Activated CD4-positive, alpha-beta T cell treated with anti-CD3 and anti-CD28 coated beads for 36 hours (primary cell): ENCODE measurements at regions of chr6 and their contacts with region 1.

Region 1: DNA sequence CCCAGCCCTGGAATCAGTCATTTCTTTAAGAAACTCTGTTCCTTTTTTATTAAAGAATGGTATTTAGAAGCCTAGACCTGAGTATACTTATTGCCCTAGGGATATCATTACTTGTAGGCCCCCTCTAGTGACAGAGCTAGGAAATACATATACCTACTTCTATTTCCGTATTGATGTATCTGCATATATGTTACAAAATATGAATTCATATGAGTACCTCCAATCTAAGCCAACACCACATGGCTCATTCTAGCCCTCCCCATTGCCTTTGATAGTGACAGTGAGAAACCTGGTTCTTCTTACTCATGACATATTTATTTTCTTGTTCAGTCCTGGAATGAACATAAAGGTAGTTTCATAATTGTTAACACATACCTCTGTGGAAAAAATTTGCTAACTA is 137.2 kb downstream of the FARS2 start:
- DNase-seq: peak; percentile 52
- ATAC-seq: peak; percentile 100
- H3K4me3 Mint-ChIP-seq: no peak overlapping the region
- H3K27ac Mint-ChIP-seq: no peak overlapping the region
- H3K4me1 Mint-ChIP-seq: peaks cover 22% of the 10 kb centered on the region
- H3K27me3 Mint-ChIP-seq: no peaks in the 10 kb centered on the region

Region 2: GRCh38 chr6:4637691-4638433 is 760.7 kb before region 1 on chr6:
- CTCF ChIA-PET with region 1: no interaction called
- POLR2A ChIA-PET with region 1: no interaction called
- intact Hi-C with region 1: loop called in 1 of 2 experiments (anchors 2 kb)
- DNase-seq: peak; percentile 69
- ATAC-seq: peak; percentile 99
- H3K4me3 Mint-ChIP-seq: no peak overlapping the region
- H3K27ac Mint-ChIP-seq: peak overlapping the region; percentile 78
- H3K4me1 Mint-ChIP-seq: peaks cover 27% of the 10 kb centered on the region
- H3K27me3 Mint-ChIP-seq: peaks cover 33% of the 10 kb centered on the region

Region 3: GRCh38 chr6:5143634-5144311 is 254.8 kb before region 1 on chr6:
- CTCF ChIA-PET with region 1: interaction called, 10 read pairs
- POLR2A ChIA-PET with region 1: no interaction called
- intact Hi-C with region 1: loop called (anchors 1 kb)
- DNase-seq: peak; percentile 91
- ATAC-seq: peak; percentile 71
- H3K4me3 Mint-ChIP-seq: no peak overlapping the region
- H3K27ac Mint-ChIP-seq: no peak overlapping the region
- H3K4me1 Mint-ChIP-seq: no peaks in the 10 kb centered on the region
- H3K27me3 Mint-ChIP-seq: no peaks in the 10 kb centered on the region

Region 4: GRCh38 chr6:5214570-5215052 is 183.9 kb before region 1 on chr6:
- CTCF ChIA-PET with region 1: interaction called, 5 read pairs
- POLR2A ChIA-PET with region 1: no interaction called
- intact Hi-C with region 1: loop called (anchors 2 to 10 kb)
- DNase-seq: peak; percentile 66
- ATAC-seq: peak; percentile 65
- H3K4me3 Mint-ChIP-seq: no peak overlapping the region
- H3K27ac Mint-ChIP-seq: no peak overlapping the region
- H3K4me1 Mint-ChIP-seq: peaks cover 10% of the 10 kb centered on the region
- H3K27me3 Mint-ChIP-seq: no peaks in the 10 kb centered on the region

Region 5: GRCh38 chr6:5279891-5280338 is 118.6 kb before region 1 on chr6:
- CTCF ChIA-PET with region 1: no interaction called
- POLR2A ChIA-PET with region 1: no interaction called
- intact Hi-C with region 1: loop called (anchors 1 kb)
- DNase-seq: peak; percentile 71
- ATAC-seq: peak; percentile 92
- H3K4me3 Mint-ChIP-seq: peak overlapping the region; percentile 10
- H3K27ac Mint-ChIP-seq: peak overlapping the region; percentile 91
- H3K4me1 Mint-ChIP-seq: peaks cover 43% of the 10 kb centered on the region
- H3K27me3 Mint-ChIP-seq: no peaks in the 10 kb centered on the region

Region 6: DNA sequence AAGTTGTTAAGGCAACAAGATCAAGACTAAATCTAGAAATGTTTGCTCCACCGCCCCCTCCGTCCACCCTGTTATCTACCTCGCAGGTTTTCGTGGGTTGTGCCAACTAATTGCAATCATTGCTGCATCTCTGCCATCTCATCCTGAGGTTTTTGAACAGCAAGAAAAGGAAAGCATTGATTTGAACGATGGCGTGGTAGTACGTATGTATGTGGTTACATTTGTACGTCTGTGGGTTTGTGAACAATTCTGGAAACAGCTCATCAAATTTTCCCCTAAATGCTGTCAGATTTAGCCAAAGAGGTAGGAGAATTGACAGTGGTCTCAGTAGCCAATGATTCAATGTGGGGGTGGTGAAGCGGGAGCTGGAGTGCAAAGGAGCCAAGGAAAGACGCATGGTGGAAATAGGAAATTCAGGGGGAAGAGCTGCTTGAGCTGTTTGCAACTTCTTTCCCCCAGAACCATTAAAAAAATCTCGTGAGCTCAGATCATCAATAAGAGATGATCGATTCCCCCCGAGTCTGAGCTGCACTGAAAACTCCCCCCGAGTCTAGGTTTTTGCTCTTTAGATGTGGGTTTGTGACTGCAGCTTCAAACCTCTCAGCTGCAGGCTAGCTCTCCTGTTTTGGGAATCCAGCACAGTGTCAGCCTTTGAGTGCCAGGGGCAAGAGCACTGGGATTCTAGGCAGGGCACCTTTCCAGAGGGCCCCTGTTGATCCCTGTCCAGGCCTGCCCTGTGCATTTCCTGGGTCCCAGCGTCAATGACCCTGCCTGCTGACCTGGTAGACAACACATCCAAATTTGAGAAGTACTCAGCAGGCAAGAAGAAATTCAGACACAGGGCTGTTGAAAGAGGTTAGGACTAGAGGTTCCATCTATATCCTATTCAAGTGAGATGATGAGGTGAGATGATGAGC is 1117.4 kb after region 1 on chr6:
- CTCF ChIA-PET with region 1: no interaction called
- POLR2A ChIA-PET with region 1: no interaction called
- intact Hi-C with region 1: loop called in 1 of 2 experiments (anchors 2 kb)
- DNase-seq: peak; percentile 84
- ATAC-seq: peak; percentile 90
- H3K4me3 Mint-ChIP-seq: no peak overlapping the region
- H3K27ac Mint-ChIP-seq: no peak overlapping the region
- H3K4me1 Mint-ChIP-seq: peaks cover 18% of the 10 kb centered on the region
- H3K27me3 Mint-ChIP-seq: peaks cover 78% of the 10 kb centered on the region